Activated naive CD4-positive, alpha-beta T cell treated with anti-CD3 and anti-CD28 coated beads for 36 hours (primary cell): ENCODE measurements at regions of chr10 and their contacts with region 1.

Region 1: GRCh38 chr10:34299105-34299611 is 515.9 kb downstream of the PARD3 start:
- DNase-seq: no peak
- H3K4me3 Mint-ChIP-seq: no peak overlapping the region
- H3K27ac Mint-ChIP-seq: no peak overlapping the region
- H3K4me1 Mint-ChIP-seq: peaks cover 15% of the 10 kb centered on the region
- H3K27me3 Mint-ChIP-seq: peaks cover 18% of the 10 kb centered on the region

Region 2: GRCh38 chr10:34126371-34127151 is 172.6 kb before region 1 on chr10:
- CTCF ChIA-PET with region 1: no interaction called
- intact Hi-C with region 1: no loop called
- DNase-seq: no peak
- H3K4me3 Mint-ChIP-seq: no peak overlapping the region
- H3K27ac Mint-ChIP-seq: no peak overlapping the region
- H3K4me1 Mint-ChIP-seq: peaks cover 23% of the 10 kb centered on the region
- H3K27me3 Mint-ChIP-seq: no peaks in the 10 kb centered on the region

Region 3: DNA sequence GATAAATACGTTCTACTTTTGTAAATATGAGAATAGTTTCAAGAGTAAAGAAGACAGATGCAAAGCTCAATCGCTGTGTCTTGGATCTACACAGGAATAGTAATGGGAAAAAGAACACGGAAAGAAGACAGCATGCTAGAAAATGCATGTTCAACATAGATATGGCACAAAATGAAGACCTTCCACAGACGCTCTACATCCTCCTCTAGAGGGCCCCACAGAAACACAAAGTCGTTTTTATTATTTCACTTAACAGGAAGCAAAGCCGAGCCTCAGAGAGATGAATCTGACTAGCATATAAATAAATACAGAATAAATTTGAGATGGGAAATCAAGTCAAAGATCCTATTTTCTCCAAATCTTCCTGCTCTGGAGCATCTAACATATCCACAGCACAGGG is 223.4 kb after region 1 on chr10:
- CTCF ChIA-PET with region 1: no interaction called
- intact Hi-C with region 1: loop called (anchors 10 kb)
- DNase-seq: no peak
- H3K4me3 Mint-ChIP-seq: no peak overlapping the region
- H3K27ac Mint-ChIP-seq: no peak overlapping the region
- H3K4me1 Mint-ChIP-seq: peaks cover 11% of the 10 kb centered on the region
- H3K27me3 Mint-ChIP-seq: peaks cover 9% of the 10 kb centered on the region